Activated CD8-positive, alpha-beta T cell treated with anti-CD3 and anti-CD28 coated beads for 36 hours (primary cell): ENCODE measurements at regions of chr1 and their contacts with region 1.

Region 1: GRCh38 chr1:241396747-241397681 is 40.0 kb upstream of the RGS7 start:
- DNase-seq: no peak
- ATAC-seq: no peak
- H3K4me3 Mint-ChIP-seq: no peak overlapping the region
- H3K27ac Mint-ChIP-seq: no peak overlapping the region
- H3K4me1 Mint-ChIP-seq: no peaks in the 10 kb centered on the region
- H3K27me3 Mint-ChIP-seq: peaks cover 5% of the 10 kb centered on the region
- CTCF ChIP-seq: no peak

Region 2: GRCh38 chr1:241325456-241325855 is 71.6 kb before region 1 on chr1:
- CTCF ChIA-PET with region 1: no interaction called
- POLR2A ChIA-PET with region 1: no interaction called
- intact Hi-C with region 1: loop called (anchors 5 kb)
- DNase-seq: no peak
- ATAC-seq: no peak
- H3K4me3 Mint-ChIP-seq: no peak overlapping the region
- H3K27ac Mint-ChIP-seq: no peak overlapping the region
- H3K4me1 Mint-ChIP-seq: no peaks in the 10 kb centered on the region
- H3K27me3 Mint-ChIP-seq: no peaks in the 10 kb centered on the region
- CTCF ChIP-seq: no peak